PC-9 (cell line): ENCODE measurements at regions of chr15 and their contacts with region 1.

Region 1: DNA sequence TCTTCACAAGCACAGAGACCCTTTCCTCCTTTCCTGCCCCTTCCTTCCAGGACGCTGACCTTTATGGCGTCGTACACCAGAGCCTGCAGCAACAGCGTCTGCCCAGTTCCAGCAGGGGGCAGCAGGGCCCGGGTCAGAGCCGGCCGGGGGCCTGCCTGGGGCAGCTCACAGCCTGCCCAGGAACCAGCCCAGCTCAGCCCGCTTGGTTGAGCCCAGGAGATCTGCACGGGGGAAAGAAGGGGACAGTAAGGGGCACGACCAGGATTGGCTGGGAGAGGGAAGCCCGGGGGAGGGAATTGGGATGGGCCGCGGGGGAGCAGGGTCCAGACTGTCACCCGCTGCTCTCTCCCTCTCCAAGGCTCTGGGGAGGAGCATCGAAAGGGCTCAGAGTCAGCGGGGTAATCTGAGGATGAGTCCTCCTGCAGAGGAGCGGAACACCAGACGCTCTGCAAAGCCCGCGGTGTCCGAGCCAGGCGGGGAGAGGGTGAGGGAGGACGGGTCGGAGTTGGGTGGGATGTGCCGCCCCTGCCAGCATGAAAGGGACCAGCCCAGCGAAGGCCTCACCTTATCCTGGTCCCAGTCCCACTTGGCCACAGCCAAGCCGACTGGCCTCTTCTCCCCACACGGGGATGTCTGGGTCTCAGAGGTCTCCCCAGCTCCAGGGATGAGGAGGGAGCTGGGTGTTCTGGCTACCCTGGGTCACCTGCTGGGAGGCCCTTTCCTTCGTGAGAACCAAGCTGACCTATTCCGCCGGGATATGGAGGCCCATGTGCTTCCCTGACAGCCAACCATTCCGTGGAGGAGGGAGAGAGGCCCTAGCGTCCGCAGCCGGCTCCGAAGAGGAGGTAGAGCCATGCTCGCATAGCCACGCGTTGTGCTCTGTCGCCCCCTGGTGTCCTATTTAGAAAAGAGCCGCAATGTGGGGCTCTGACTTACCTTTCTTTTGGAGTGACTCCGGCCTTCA is 7.4 kb upstream of the IGDCC3 start:
- DNase-seq: peak; percentile 57 to 85
- H3K4me3 ChIP-seq: peak overlapping the region; percentile 46
- H3K27ac ChIP-seq: no peak overlapping the region
- H3K4me1 ChIP-seq: peaks cover 4% of the 10 kb centered on the region; the same call in 1 of the 2 replicates
- H3K27me3 ChIP-seq: peaks cover 18% of the 10 kb centered on the region
- CTCF ChIP-seq: peak; percentile 80

Region 2: GRCh38 chr15:65318870-65319356 is 66.3 kb before region 1 on chr15:
- CTCF ChIA-PET with region 1: interaction called, 20 read pairs
- POLR2A ChIA-PET with region 1: no interaction called
- intact Hi-C with region 1: loop called (anchors 1 kb)
- DNase-seq: peak; percentile 49 to 80
- H3K4me3 ChIP-seq: no peak overlapping the region
- H3K27ac ChIP-seq: no peak overlapping the region
- H3K4me1 ChIP-seq: no peaks in the 10 kb centered on the region
- H3K27me3 ChIP-seq: no peaks in the 10 kb centered on the region
- CTCF ChIP-seq: peak; percentile 88

Region 3: GRCh38 chr15:65364838-65365628 is 20.1 kb before region 1 on chr15:
- CTCF ChIA-PET with region 1: no interaction called
- POLR2A ChIA-PET with region 1: no interaction called
- intact Hi-C with region 1: loop called (anchors 2 kb)
- DNase-seq: peak; percentile 63 to 77
- H3K4me3 ChIP-seq: peak overlapping the region; percentile 28; the same call in 1 of the 2 replicates
- H3K27ac ChIP-seq: peak overlapping the region; percentile 46
- H3K4me1 ChIP-seq: peaks cover 49% of the 10 kb centered on the region
- H3K27me3 ChIP-seq: no peaks in the 10 kb centered on the region
- CTCF ChIP-seq: no peak

Region 4: DNA sequence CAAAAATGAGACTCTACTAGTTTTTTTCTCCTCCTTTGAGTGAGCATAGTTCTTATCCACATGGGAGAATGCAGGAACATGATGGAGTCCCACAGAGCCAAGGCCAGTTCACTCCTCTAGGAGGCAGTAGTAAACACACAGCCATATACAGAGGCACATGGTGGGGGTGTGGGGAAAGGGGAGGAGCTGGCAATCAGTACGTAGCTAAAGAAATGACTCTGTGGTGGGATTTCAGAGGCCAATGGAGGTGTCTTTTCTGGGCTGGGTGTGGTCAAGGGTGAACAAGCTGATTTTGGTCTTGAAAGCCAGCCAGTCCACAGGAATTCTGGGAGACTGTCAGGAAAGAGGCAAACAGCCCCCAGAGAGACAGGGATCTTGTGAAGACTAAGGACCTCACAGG is 477.5 kb after region 1 on chr15:
- CTCF ChIA-PET with region 1: interaction called, 14 read pairs
- POLR2A ChIA-PET with region 1: no interaction called
- intact Hi-C with region 1: no loop called
- DNase-seq: peak in 1 of 2 experiments; percentile 6
- H3K4me3 ChIP-seq: no peak overlapping the region
- H3K27ac ChIP-seq: no peak overlapping the region
- H3K4me1 ChIP-seq: no peaks in the 10 kb centered on the region
- H3K27me3 ChIP-seq: no peaks in the 10 kb centered on the region
- CTCF ChIP-seq: no peak; the same call in 1 of the 2 replicates